Colonic mucosa (tissue), 4 donors: ENCODE measurements at regions of chr7 and their contacts with region 1.

Region 1: DNA sequence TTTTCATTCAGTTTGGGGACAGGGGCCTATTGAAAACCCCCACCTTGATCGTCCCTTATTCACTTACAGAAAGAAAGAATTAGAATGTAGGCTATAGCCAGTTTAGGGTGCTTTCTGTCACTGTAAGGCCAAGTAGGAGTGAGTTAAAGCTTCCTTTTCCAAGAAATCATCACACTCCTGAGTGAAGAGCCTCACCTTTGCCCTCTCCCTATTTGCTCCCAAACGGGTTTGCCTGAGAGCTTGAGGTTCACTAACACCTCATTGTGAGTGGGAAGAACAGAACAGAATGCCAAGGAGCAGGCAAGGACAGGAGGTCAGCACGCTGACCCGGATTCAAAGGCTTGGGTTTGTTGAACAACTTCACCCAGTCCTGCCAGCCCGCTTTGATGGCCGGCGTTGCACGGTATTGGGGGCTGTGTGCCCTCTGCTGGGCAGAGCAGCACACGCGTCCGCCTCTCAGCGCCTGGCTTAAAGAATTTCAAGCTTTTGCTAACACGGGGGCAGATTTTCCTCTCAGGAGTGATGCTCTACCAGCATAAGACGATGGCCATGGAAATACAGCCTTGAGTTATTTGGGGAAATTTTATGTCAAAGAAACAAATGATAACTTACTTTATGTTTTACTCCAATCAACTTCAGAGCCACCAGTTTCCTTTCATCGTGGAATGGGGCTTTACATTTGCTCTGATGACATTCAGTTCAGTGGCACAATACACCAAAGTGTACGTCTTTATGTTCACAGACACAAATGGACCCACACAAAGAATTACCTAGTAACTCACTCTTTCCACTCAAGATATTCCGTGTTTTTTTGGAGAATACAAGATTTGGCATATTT is 470.0 kb downstream of the SUGCT start:
- DNase-seq: peak; percentile 38
- H3K4me3 ChIP-seq: no peak overlapping the region
- H3K27ac ChIP-seq: no peak overlapping the region
- H3K4me1 ChIP-seq: no peaks in the 10 kb centered on the region
- H3K27me3 ChIP-seq: no peaks in the 10 kb centered on the region
- CTCF ChIP-seq: peak; percentile 41

Region 2: DNA sequence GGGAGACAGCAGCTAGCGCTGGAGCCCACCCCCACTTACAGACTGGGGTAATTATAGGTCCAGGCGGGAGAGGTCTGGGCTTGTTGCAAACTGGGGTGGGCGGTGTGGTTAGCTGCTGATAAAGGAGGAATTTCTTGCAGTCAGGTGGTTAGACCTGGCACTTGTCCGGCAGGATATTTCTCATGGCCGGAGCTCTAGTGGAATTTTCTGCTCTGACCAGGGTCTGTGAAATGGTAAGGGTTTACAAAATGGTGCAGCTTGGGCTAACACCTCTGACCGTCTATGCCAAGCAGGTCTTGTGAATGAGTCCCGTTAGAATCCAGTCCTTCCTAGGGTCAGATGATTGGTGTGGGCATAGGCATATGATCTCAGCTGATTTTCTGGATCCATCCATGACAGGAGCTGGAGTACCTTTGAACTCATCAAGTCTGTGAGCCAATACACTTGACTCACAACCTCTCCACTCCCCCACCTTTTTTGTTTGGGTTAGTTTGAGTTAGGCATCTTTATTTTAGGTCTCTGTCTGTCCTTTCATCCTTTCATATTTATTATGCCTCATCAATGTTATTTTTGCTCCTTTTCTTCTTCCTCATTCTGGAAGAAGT is 256.6 kb before region 1 on chr7:
- intact Hi-C with region 1: loop called (anchors 10 kb)
- DNase-seq: no peak
- H3K4me3 ChIP-seq: no peak overlapping the region
- H3K27ac ChIP-seq: no peak overlapping the region
- H3K4me1 ChIP-seq: no peaks in the 10 kb centered on the region
- H3K27me3 ChIP-seq: no peaks in the 10 kb centered on the region
- CTCF ChIP-seq: no peak